ENCODE measurements at regions of chr11 and their contacts with region 1.

Region 1: DNA sequence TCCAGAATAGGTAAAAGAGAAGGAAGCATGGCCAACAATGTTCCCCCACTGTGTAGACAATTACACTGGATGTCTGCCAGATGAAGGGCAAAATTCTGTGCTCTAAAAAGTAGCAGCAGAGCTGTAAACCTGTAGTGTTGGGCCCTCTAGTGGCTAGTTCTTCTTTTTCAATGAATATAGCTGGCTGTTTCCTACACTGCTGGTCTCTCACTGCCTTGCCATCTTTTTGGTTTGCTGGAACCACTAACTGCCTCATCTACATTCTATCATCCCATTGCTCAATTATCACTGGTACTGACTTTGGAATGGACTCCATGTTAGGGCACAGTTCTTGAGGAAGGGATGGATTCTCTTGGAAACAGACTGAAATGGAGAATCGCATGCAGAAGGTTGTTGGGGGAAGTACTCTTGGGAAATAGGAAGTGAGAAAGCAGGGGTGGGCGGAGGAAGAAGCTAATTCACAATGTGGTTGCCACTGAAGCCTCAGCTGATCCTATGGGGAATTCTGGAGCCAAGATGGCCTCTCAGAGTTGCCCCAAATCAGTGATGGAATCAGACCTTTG is 17.9 kb downstream of the KCNE3 start:
- DNase-seq: peak; percentile 93
- ATAC-seq: peak; percentile 80
- H3K4me3 ChIP-seq: no peak overlapping the region
- H3K27ac ChIP-seq: no peak overlapping the region
- H3K4me1 ChIP-seq: no peaks in the 10 kb centered on the region
- H3K27me3 ChIP-seq: no peaks in the 10 kb centered on the region
- CTCF ChIP-seq: peak; percentile 94

Region 2: GRCh38 chr11:74069147-74070047 is 380.1 kb before region 1 on chr11:
- CTCF ChIA-PET with region 1: no interaction called
- POLR2A ChIA-PET with region 1: no interaction called
- intact Hi-C with region 1: loop called (anchors 10 kb)
- DNase-seq: peak; percentile 95
- ATAC-seq: peak; percentile 5; the same call in 1 of the 2 replicates
- H3K4me3 ChIP-seq: no peak overlapping the region; the same call in 1 of the 2 replicates
- H3K27ac ChIP-seq: peak overlapping the region; percentile 90
- H3K4me1 ChIP-seq: peaks cover 59% of the 10 kb centered on the region
- H3K27me3 ChIP-seq: no peaks in the 10 kb centered on the region
- CTCF ChIP-seq: no peak

Region 3: GRCh38 chr11:74311352-74311926 is 138.0 kb before region 1 on chr11 and contains the start of gene P4HA3:
- CTCF ChIA-PET with region 1: no interaction called
- POLR2A ChIA-PET with region 1: no interaction called
- intact Hi-C with region 1: no loop called
- DNase-seq: peak; percentile 67
- ATAC-seq: peak; percentile 97
- H3K4me3 ChIP-seq: peak within 1 kb of the TSS; percentile 74
- H3K27ac ChIP-seq: no peak within 1 kb of the TSS
- H3K4me1 ChIP-seq: peaks cover 10% of the 10 kb centered on the region; the same call in 1 of the 2 replicates
- H3K27me3 ChIP-seq: no peaks in the 10 kb centered on the region
- CTCF ChIP-seq: peak; percentile 44
- total RNA-seq, gene P4HA3: 2.0 and 3.7 TPM in 2 replicates

Region 4: GRCh38 chr11:74388678-74389327 is 60.6 kb before region 1 on chr11:
- CTCF ChIA-PET with region 1: interaction called, 30 read pairs
- POLR2A ChIA-PET with region 1: no interaction called
- intact Hi-C with region 1: loop called (anchors 1 kb)
- DNase-seq: peak; percentile 87
- ATAC-seq: peak; percentile 95
- H3K4me3 ChIP-seq: no peak overlapping the region
- H3K27ac ChIP-seq: no peak overlapping the region
- H3K4me1 ChIP-seq: peaks cover 4% of the 10 kb centered on the region
- H3K27me3 ChIP-seq: no peaks in the 10 kb centered on the region
- CTCF ChIP-seq: peak; percentile 98

Region 5: GRCh38 chr11:74473382-74474173 is 24.1 kb after region 1 on chr11:
- CTCF ChIA-PET with region 1: interaction called, 16 read pairs
- POLR2A ChIA-PET with region 1: interaction called, 3 read pairs
- intact Hi-C with region 1: no loop called
- DNase-seq: no peak
- ATAC-seq: no peak
- H3K4me3 ChIP-seq: no peak overlapping the region
- H3K27ac ChIP-seq: no peak overlapping the region
- H3K4me1 ChIP-seq: no peaks in the 10 kb centered on the region
- H3K27me3 ChIP-seq: no peaks in the 10 kb centered on the region
- CTCF ChIP-seq: no peak

Region 6: DNA sequence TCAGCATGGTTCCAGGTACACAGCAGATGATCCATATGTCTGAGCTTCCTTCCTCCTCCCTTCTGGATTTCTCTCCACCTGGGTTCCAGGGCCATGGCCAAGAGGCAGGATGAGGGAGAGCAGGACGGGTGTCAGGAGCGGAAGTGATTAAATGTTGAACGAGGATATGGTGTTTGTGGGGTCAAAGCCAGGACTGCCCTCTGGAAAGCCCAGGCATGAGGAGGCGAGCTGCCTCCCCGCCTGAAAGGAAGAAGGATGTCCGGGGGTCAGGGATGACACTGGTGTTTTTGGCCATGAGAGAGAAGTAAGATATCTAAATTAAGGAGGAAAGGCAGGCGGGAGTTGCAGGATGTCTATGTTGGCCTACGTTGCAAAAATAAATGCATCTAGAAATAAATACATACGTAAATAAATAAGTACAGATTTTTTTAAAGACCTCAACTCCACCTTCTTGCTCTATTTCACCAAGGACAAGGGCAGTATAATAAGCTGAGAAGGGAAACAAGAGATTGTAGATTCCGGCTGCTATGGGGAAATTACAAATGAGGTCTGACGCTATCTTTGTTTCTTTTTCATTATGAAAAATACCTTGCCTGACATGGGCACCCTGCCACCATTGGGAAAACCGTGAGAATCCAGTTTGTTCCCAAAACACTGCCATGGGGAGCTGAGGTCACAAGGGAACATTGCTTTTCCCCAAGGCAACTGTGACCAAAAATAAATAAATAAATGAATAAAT is 71.6 kb after region 1 on chr11:
- CTCF ChIA-PET with region 1: interaction called, 9 read pairs
- POLR2A ChIA-PET with region 1: no interaction called
- intact Hi-C with region 1: loop called (anchors 2 kb)
- DNase-seq: no peak
- ATAC-seq: no peak
- H3K4me3 ChIP-seq: no peak overlapping the region
- H3K27ac ChIP-seq: no peak overlapping the region
- H3K4me1 ChIP-seq: peaks cover 14% of the 10 kb centered on the region
- H3K27me3 ChIP-seq: no peaks in the 10 kb centered on the region
- CTCF ChIP-seq: no peak